Mammary epithelial cell (primary cell): ENCODE measurements at regions of chr2 and their contacts with region 1.

Region 1: GRCh38 chr2:99066075-99066958 is 75.2 kb upstream of the C2orf15 start:
- DNase-seq: peak; percentile 49
- H3K4me3 ChIP-seq: peak overlapping the region in 2 of 3 experiments; percentile 4 to 16
- H3K27ac ChIP-seq: peak overlapping the region; percentile 18
- H3K4me1 ChIP-seq: peaks cover 5% of the 10 kb centered on the region
- H3K27me3 ChIP-seq: no peaks in the 10 kb centered on the region
- CTCF ChIP-seq: peak; percentile 65 to 72

Region 2: DNA sequence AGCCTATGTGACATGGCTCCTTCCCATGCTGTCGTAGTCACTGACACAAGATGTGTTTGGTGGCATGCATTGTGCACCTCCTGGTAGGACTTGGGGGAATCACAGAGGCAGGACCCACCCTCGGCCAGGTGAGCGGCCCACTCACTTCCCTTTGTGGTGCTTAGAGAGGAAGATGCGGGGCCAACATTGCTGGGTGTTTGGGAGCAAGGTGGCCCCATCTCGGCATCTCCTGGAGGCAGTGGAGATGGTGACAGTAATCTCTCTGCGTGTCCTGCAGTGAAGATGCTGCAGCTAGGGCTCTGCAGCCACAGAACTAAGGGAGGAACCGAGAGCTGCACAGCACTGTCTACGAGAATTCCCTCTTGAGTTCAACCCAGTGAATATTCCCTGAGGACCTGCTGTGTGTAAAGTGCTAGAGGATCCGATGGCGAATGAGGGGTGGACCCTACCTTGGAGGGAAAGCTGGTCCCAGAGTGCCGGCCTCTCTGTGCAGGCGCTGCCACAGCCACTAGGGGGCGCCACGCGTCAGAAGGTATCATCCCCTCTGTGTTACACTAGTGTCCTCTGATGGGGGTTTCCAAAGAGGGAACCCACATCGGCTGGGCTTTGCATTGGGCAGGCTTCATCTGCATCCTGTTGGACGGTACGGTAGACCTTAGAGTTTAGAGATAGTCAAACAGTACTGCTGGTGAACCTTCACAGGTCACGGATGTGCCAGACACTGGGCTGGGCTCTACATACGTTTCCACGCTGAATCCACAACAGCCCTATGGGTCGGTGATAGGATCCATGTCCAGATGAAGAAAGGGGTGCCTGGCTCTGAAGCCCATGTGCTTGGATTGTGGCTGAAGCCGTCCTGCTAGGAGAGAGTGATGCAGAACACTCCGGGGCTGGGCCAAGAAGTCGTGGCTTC is 497.2 kb before region 1 on chr2:
- CTCF ChIA-PET with region 1: no interaction called
- dilution Hi-C with region 1: no loop called
- in situ Hi-C with region 1: no loop called
- intact Hi-C with region 1: loop called (anchors 1 kb)
- DNase-seq: peak; percentile 12
- H3K4me3 ChIP-seq: no peak overlapping the region
- H3K27ac ChIP-seq: no peak overlapping the region
- H3K4me1 ChIP-seq: no peaks in the 10 kb centered on the region
- H3K27me3 ChIP-seq: no peaks in the 10 kb centered on the region
- CTCF ChIP-seq: peak; percentile 80 to 90

Region 3: DNA sequence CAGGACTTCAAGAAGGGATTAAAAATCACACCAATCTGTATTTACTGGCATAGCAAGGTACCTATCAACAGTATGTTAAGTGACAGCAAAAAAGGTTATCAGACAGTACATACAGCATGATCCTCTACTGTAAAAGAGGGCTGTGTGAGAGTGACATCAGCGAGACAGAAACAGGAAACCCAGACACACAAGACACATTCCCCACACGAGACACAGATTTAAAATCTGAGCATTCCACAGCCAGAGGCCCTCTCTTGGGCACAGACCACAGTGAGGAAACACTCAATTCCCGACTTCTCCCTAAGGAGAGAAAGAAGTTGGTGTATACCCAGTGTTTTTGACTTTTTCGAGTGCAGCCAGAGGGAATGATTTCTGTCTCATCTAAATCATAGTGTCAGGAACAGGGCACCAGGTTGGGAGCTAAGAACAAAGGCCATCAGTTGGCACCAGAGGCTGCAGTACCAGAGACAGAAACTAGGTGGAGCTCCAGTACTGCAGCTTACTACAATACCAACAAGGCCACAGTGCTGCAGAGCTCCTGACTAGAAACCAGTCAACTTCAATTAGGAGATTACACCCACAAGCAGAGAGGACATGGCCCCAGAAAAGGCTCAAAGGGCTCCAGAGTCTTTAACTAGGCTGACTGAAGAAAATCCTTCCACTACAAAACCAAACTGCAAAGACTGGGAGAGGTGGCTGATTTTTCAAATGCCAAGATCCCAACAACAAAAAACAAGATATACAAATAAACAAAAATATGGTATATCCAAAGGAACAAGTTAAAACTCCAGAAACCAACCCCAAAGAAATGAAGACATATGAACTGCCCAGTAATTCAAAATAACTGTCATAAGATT is 417.0 kb before region 1 on chr2:
- CTCF ChIA-PET with region 1: interaction called, 8 read pairs
- dilution Hi-C with region 1: no loop called
- in situ Hi-C with region 1: loop called (anchors 5 kb)
- intact Hi-C with region 1: loop called (anchors 1 kb)
- DNase-seq: peak; percentile 65
- H3K4me3 ChIP-seq: no peak overlapping the region
- H3K27ac ChIP-seq: no peak overlapping the region
- H3K4me1 ChIP-seq: peaks cover 7% of the 10 kb centered on the region
- H3K27me3 ChIP-seq: no peaks in the 10 kb centered on the region
- CTCF ChIP-seq: peak; percentile 99

Region 4: GRCh38 chr2:98835831-98836385 is 230.4 kb before region 1 on chr2:
- CTCF ChIA-PET with region 1: interaction called, 4 read pairs
- dilution Hi-C with region 1: no loop called
- in situ Hi-C with region 1: loop called (anchors 5 to 25 kb)
- intact Hi-C with region 1: loop called (anchors 1 kb)
- DNase-seq: no peak
- H3K4me3 ChIP-seq: no peak overlapping the region
- H3K27ac ChIP-seq: no peak overlapping the region
- H3K4me1 ChIP-seq: peaks cover 23% of the 10 kb centered on the region
- H3K27me3 ChIP-seq: no peaks in the 10 kb centered on the region
- CTCF ChIP-seq: no peak

Region 5: DNA sequence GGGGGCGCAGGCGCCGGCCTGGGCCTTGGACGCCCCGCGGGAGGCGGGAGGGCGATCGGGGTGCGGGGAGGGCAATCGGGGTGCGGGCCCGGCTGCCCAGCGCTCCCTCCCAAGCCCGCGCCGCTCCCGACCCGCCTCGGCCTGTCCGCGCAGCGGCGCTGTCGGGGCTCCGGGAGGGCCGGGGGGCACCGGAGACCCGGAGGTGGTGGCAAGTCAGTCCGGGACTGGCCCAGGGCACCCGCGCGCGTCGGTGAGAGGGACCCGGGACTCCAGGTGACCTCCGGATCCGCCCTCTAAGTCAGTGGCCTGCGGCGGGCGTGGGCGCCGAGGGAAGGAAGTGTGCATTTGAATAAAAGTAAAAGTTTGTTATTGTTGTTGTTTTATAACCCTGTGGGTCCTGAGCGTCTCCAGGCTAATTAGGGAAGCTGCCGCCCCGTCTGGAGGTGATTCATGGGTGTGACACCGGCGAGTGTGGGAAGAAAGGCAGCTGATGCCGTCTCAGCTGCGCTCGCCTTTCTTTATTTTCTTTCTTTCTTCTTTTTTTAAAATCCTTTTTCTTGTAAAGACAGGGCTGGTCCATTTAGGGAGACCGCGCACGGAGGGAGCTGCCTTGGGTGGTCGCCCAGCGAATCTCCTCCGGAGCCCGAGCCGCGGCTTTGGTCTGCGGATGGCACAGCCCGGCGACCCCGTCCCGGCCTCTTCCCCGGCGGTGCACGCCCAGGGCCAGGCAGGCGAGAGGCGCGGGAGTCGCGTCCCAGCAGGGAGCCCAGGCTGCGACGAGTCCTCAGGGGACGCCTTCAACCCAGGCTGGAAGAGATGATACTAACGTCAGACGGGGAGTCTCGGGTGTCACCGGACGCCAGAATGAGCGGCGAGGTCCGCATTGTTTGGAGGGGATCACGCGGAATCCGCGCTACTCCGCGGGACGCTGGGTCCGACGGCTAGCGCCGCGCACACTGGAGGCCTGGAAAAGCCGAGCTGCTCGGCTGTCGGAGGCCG is 129.7 kb before region 1 on chr2:
- CTCF ChIA-PET with region 1: no interaction called
- dilution Hi-C with region 1: no loop called
- in situ Hi-C with region 1: no loop called
- intact Hi-C with region 1: loop called (anchors 1 kb)
- DNase-seq: peak; percentile 53
- H3K4me3 ChIP-seq: peak overlapping the region; percentile 66 to 78 (median 71)
- H3K27ac ChIP-seq: peak overlapping the region; percentile 59
- H3K4me1 ChIP-seq: peaks cover 18% of the 10 kb centered on the region
- H3K27me3 ChIP-seq: no peaks in the 10 kb centered on the region
- CTCF ChIP-seq: peak; percentile 10 to 42